Ascending aorta (tissue), 2 donors: ENCODE measurements at regions of chr22 and their contacts with region 1.

Region 1: DNA sequence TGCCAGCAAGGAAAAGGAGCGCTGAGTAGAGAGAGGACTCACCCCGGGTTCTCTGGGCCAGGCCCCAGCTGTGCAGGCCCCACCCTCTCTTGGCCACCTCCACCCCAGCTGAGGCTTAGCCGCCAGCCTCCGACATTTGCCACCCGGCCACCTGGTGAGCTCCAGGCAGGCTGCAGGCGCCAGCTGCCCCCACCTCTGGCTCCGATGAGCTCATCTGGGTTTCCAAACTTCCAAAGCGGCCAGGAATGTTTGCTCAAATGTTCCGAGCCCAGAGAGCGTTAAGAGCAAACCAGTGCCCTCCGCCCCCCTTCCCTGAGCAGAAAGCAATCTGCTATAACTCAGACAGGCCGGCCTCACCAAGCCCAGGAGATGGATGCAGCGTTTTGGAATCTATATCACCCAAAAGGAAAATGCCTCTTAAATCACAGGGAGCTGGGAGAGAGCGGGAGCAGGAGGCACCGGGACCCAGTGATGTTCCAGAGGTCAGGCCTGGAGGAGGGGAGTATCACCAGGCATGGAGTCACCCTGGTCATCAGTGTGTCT is 9.1 kb upstream of the MN1 start:
- DNase-seq: peak; percentile 73 to 96
- H3K4me3 ChIP-seq: peak overlapping the region in 1 of 2 donors; percentile 40
- H3K27ac ChIP-seq: peak overlapping the region; percentile 84 to 86
- H3K4me1 ChIP-seq: peaks cover 19 to 31% of the 10 kb centered on the region in 2 donors
- H3K27me3 ChIP-seq: no peaks in the 10 kb centered on the region
- CTCF ChIP-seq: no peak

Region 2: GRCh38 chr22:27866132-27867086 is 55.7 kb after region 1 on chr22:
- intact Hi-C with region 1: loop called (anchors 5 kb)
- DNase-seq: no peak
- H3K4me3 ChIP-seq: no peak overlapping the region
- H3K27ac ChIP-seq: peak overlapping the region; percentile 82 to 86
- H3K4me1 ChIP-seq: peaks cover 4 to 46% of the 10 kb centered on the region in 2 donors
- H3K27me3 ChIP-seq: no peaks in the 10 kb centered on the region
- CTCF ChIP-seq: no peak